ENCODE measurements at regions of chr1 and their contacts with region 1.

Region 1: DNA sequence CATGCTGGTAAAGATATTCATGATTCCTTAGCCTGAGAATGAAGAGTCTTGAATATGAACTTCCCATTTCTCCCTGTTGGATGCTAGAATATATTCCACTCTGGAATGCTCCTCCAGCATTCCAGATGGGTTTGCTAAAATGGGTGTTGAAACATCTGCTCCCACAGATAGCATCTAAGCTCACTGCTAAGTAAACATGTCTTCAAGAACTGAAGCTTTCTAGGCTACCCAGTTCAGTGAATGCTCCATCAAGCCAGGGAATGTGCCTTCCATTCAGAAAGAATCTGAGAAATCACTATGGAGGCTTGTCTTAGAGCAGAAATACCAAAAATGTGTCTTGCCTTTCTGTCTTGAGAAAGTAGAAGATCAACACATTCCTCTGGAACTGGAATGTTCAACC is 81.1 kb downstream of the TNFSF18 start:
- DNase-seq: peak; percentile 32
- H3K4me3 ChIP-seq: no peak overlapping the region
- H3K27ac ChIP-seq: peak overlapping the region; percentile 90
- H3K4me1 ChIP-seq: peaks cover 57% of the 10 kb centered on the region
- H3K27me3 ChIP-seq: no peaks in the 10 kb centered on the region
- CTCF ChIP-seq: no peak

Region 2: DNA sequence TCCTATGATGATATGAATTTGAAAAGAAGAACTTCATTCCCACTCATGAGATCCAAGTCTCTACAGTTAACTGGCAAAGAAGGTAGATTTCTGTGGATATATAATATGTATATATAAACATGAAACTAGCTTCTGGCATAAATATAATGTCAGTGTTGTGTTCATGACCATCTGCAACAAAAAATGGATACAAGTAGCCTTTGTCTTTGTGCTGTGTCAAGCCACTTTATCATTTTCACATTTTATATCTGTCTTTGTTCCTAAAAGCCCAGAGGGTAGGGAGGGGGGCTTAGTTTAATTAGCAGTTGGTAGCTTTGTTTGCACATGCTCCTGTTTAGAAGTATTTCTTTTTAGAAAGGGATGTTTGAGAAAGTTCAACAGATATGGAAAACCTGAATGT is 366.9 kb before region 1 on chr1:
- CTCF ChIA-PET with region 1: no interaction called
- dilution Hi-C with region 1: no loop called
- in situ Hi-C with region 1: no loop called
- intact Hi-C with region 1: no loop called
- DNase-seq: no peak
- H3K4me3 ChIP-seq: no peak overlapping the region
- H3K27ac ChIP-seq: no peak overlapping the region
- H3K4me1 ChIP-seq: peaks cover 7% of the 10 kb centered on the region
- H3K27me3 ChIP-seq: no peaks in the 10 kb centered on the region
- CTCF ChIP-seq: no peak

Region 3: GRCh38 chr1:173002891-173003838 is 33.6 kb after region 1 on chr1:
- CTCF ChIA-PET with region 1: no interaction called
- dilution Hi-C with region 1: no loop called
- in situ Hi-C with region 1: no loop called
- intact Hi-C with region 1: no loop called
- DNase-seq: peak; percentile 88
- H3K4me3 ChIP-seq: no peak overlapping the region
- H3K27ac ChIP-seq: peak overlapping the region; percentile 27
- H3K4me1 ChIP-seq: peaks cover 13% of the 10 kb centered on the region
- H3K27me3 ChIP-seq: no peaks in the 10 kb centered on the region
- CTCF ChIP-seq: no peak

Region 4: GRCh38 chr1:173048621-173049321 is 79.2 kb after region 1 on chr1:
- CTCF ChIA-PET with region 1: no interaction called
- dilution Hi-C with region 1: no loop called
- in situ Hi-C with region 1: no loop called
- intact Hi-C with region 1: loop called (anchors 5 kb)
- DNase-seq: peak; percentile 62
- H3K4me3 ChIP-seq: no peak overlapping the region
- H3K27ac ChIP-seq: no peak overlapping the region
- H3K4me1 ChIP-seq: peaks cover 43% of the 10 kb centered on the region
- H3K27me3 ChIP-seq: no peaks in the 10 kb centered on the region
- CTCF ChIP-seq: no peak

Measured in mammary epithelial cell (primary cell).